GM12878 (cell line): ENCODE measurements at regions of chr17 and their contacts with region 1.

Region 1: GRCh38 chr17:72539981-72540897 is 419.4 kb downstream of the SOX9 start:
- DNase-seq: no peak
- ATAC-seq: peak; percentile 99
- H3K4me3 ChIP-seq: no peak overlapping the region
- H3K27ac ChIP-seq: no peak overlapping the region
- H3K4me1 ChIP-seq: peaks cover 5% of the 10 kb centered on the region
- H3K27me3 ChIP-seq: no peaks in the 10 kb centered on the region
- CTCF ChIP-seq: peak; percentile 68 to 94 (median 84)
- EP300 ChIP-seq: 0 out of 4 replicates have a peak, but pooled peaks have one; percentile 7 to 25
- POLR2A ChIP-seq: no peak
- RAD21 ChIP-seq: peak; percentile 90

Region 2: GRCh38 chr17:71118039-71118438 is 1422.2 kb before region 1 on chr17:
- CTCF ChIA-PET with region 1: no interaction called
- POLR2A ChIA-PET with region 1: no interaction called
- RAD21 ChIA-PET with region 1: no interaction called
- SMC1A ChIA-PET with region 1: no interaction called
- in situ Hi-C with region 1: loop called (anchors 25 kb)
- intact Hi-C with region 1: no loop called
- DNase-seq: no peak
- ATAC-seq: no peak
- H3K4me3 ChIP-seq: no peak overlapping the region
- H3K27ac ChIP-seq: no peak overlapping the region
- H3K4me1 ChIP-seq: no peaks in the 10 kb centered on the region
- H3K27me3 ChIP-seq: no peaks in the 10 kb centered on the region
- CTCF ChIP-seq: peak in 1 of 3 experiments; percentile 18; a peak in 1 of 6 replicates
- EP300 ChIP-seq: no peak
- POLR2A ChIP-seq: no peak
- RAD21 ChIP-seq: peak; percentile 34

Region 3: GRCh38 chr17:72030067-72030899 is 510.0 kb before region 1 on chr17:
- CTCF ChIA-PET with region 1: interaction called, 12 read pairs
- POLR2A ChIA-PET with region 1: no interaction called
- RAD21 ChIA-PET with region 1: no interaction called
- SMC1A ChIA-PET with region 1: interaction called, 5 read pairs
- in situ Hi-C with region 1: no loop called
- intact Hi-C with region 1: loop called (anchors 5 kb)
- DNase-seq: peak; percentile 71
- ATAC-seq: peak; percentile 81
- H3K4me3 ChIP-seq: peak overlapping the region; percentile 80
- H3K27ac ChIP-seq: peak overlapping the region; percentile 91
- H3K4me1 ChIP-seq: peaks cover 45% of the 10 kb centered on the region
- H3K27me3 ChIP-seq: no peaks in the 10 kb centered on the region
- CTCF ChIP-seq: peak; percentile 30 to 48 (median 40); a peak in 4 of 6 replicates
- EP300 ChIP-seq: 0 out of 4 replicates have a peak, but pooled peaks of 1 of the 2 experiments have one; percentile 4
- POLR2A ChIP-seq: peak; percentile 65
- RAD21 ChIP-seq: peak; percentile 25; the same call in 1 of the 2 replicates

Region 4: GRCh38 chr17:72421128-72422092 is 118.8 kb before region 1 on chr17:
- CTCF ChIA-PET with region 1: interaction called, 26 read pairs
- POLR2A ChIA-PET with region 1: interaction called, 6 read pairs
- RAD21 ChIA-PET with region 1: interaction called, 48 read pairs
- SMC1A ChIA-PET with region 1: interaction called, 75 read pairs
- in situ Hi-C with region 1: no loop called
- intact Hi-C with region 1: no loop called
- DNase-seq: peak; percentile 94
- ATAC-seq: peak; percentile 44
- H3K4me3 ChIP-seq: peak overlapping the region; percentile 42; the same call in 1 of the 2 replicates
- H3K27ac ChIP-seq: peak overlapping the region; percentile 95
- H3K4me1 ChIP-seq: peaks cover 64% of the 10 kb centered on the region
- H3K27me3 ChIP-seq: no peaks in the 10 kb centered on the region
- CTCF ChIP-seq: no peak
- EP300 ChIP-seq: peak; percentile 97
- POLR2A ChIP-seq: peak; percentile 61
- RAD21 ChIP-seq: peak; percentile 12; the same call in 1 of the 2 replicates

Region 5: GRCh38 chr17:72479113-72479512 is 61.1 kb before region 1 on chr17:
- CTCF ChIA-PET with region 1: interaction called, 23 read pairs
- POLR2A ChIA-PET with region 1: interaction called, 3 read pairs
- RAD21 ChIA-PET with region 1: interaction called, 4 read pairs
- SMC1A ChIA-PET with region 1: interaction called, 3 read pairs
- in situ Hi-C with region 1: no loop called
- intact Hi-C with region 1: no loop called
- DNase-seq: no peak
- ATAC-seq: peak; percentile 64
- H3K4me3 ChIP-seq: no peak overlapping the region
- H3K27ac ChIP-seq: no peak overlapping the region
- H3K4me1 ChIP-seq: no peaks in the 10 kb centered on the region
- H3K27me3 ChIP-seq: no peaks in the 10 kb centered on the region
- CTCF ChIP-seq: peak; percentile 16 to 30 (median 16); a peak in 3 of 6 replicates
- EP300 ChIP-seq: no peak
- POLR2A ChIP-seq: no peak
- RAD21 ChIP-seq: peak; percentile 47; the same call in 1 of the 2 replicates

Region 6: GRCh38 chr17:72529386-72529785 is 10.9 kb before region 1 on chr17:
- CTCF ChIA-PET with region 1: interaction called, 13 read pairs
- POLR2A ChIA-PET with region 1: interaction called, 3 read pairs
- RAD21 ChIA-PET with region 1: interaction called, 24 read pairs
- SMC1A ChIA-PET with region 1: interaction called, 20 read pairs
- in situ Hi-C with region 1: no loop called
- intact Hi-C with region 1: no loop called
- DNase-seq: no peak
- ATAC-seq: no peak
- H3K4me3 ChIP-seq: no peak overlapping the region
- H3K27ac ChIP-seq: no peak overlapping the region
- H3K4me1 ChIP-seq: no peaks in the 10 kb centered on the region
- H3K27me3 ChIP-seq: no peaks in the 10 kb centered on the region
- CTCF ChIP-seq: no peak
- EP300 ChIP-seq: no peak
- POLR2A ChIP-seq: no peak
- RAD21 ChIP-seq: no peak